ENCODE measurements at regions of chr1 and their contacts with region 1.

Region 1: GRCh38 chr1:47710329-47711071 is 272.7 kb downstream of the FOXD2 start:
- DNase-seq: peak; percentile 86
- ATAC-seq: peak; percentile 56
- H3K4me3 Mint-ChIP-seq: peak overlapping the region; percentile 64
- H3K27ac Mint-ChIP-seq: no peak overlapping the region
- H3K4me1 Mint-ChIP-seq: peaks cover 29% of the 10 kb centered on the region
- H3K27me3 Mint-ChIP-seq: peaks cover 99% of the 10 kb centered on the region
- CTCF ChIP-seq: peak; percentile 97

Region 2: DNA sequence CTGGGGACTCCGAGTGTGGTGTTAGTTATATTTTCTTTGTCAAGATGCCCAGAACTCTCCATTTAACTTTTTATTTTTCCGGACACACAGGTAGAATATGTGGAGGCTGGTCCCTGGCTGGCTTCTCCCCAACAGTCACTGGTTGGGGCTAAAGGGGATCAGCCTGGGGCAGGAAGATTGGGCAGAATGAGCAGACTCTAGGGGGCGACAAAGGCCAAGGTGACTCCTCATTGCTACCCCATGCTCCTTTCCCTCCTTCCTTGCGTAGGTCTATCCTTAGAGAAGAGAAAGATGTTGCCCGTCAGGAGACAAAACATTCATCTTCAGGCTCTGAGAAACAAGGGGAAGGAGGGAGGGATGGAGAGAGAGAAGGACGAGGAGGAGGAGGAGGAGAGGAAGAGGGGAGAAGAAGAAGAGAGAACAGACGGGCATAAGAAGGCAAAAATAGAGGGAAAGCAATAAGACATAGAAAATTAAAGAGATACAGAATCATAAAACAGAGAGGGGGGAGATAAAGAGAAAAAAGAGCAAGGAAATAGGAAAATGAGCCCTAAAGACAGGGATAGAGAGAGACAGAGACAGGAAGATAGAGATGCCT is 182.7 kb before region 1 on chr1:
- CTCF ChIA-PET with region 1: interaction called, 20 read pairs
- POLR2A ChIA-PET with region 1: no interaction called
- DNase-seq: peak; percentile 74
- ATAC-seq: peak; percentile 72
- H3K4me3 Mint-ChIP-seq: no peak overlapping the region
- H3K27ac Mint-ChIP-seq: no peak overlapping the region
- H3K4me1 Mint-ChIP-seq: peaks cover 37% of the 10 kb centered on the region
- H3K27me3 Mint-ChIP-seq: peaks cover 36% of the 10 kb centered on the region
- CTCF ChIP-seq: peak; percentile 64

Region 3: GRCh38 chr1:47532921-47533792 is 177.3 kb before region 1 on chr1:
- CTCF ChIA-PET with region 1: interaction called, 20 read pairs
- POLR2A ChIA-PET with region 1: no interaction called
- DNase-seq: peak; percentile 73
- ATAC-seq: peak; percentile 76
- H3K4me3 Mint-ChIP-seq: peak overlapping the region; percentile 78
- H3K27ac Mint-ChIP-seq: peak overlapping the region; percentile 80; the same call in 1 of the 2 replicates
- H3K4me1 Mint-ChIP-seq: peaks cover 33% of the 10 kb centered on the region
- H3K27me3 Mint-ChIP-seq: peaks cover 34% of the 10 kb centered on the region
- CTCF ChIP-seq: no peak

Region 4: GRCh38 chr1:47684964-47685762 is 25.3 kb before region 1 on chr1:
- CTCF ChIA-PET with region 1: interaction called, 12 read pairs
- POLR2A ChIA-PET with region 1: no interaction called
- DNase-seq: no peak
- ATAC-seq: no peak
- H3K4me3 Mint-ChIP-seq: no peak overlapping the region
- H3K27ac Mint-ChIP-seq: no peak overlapping the region
- H3K4me1 Mint-ChIP-seq: peaks cover 38% of the 10 kb centered on the region
- H3K27me3 Mint-ChIP-seq: no peaks in the 10 kb centered on the region; the same call in 1 of the 2 replicates
- CTCF ChIP-seq: no peak

Measured in WTC11 (cell line).